ENCODE measurements at regions of chr22 and their contacts with region 1.

Region 1: GRCh38 chr22:28829358-28830181 is 29.2 kb upstream of the XBP1 start:
- DNase-seq: peak; percentile 27 to 88 (median 65)
- ATAC-seq: peak; percentile 68 to 83 (median 76)
- H3K4me3 ChIP-seq: no peak overlapping the region
- H3K4me3 Mint-ChIP-seq: peak overlapping the region in 1 of 3 donors; percentile 54
- H3K27ac ChIP-seq: no peak overlapping the region
- H3K27ac Mint-ChIP-seq: peak overlapping the region in 1 of 2 donors; percentile 34
- H3K4me1 ChIP-seq: peaks cover 3 to 16% of the 10 kb centered on the region in 2 experiments
- H3K4me1 Mint-ChIP-seq: peaks cover 26 to 36% (median 33%) of the 10 kb centered on the region in 3 donors
- H3K27me3 ChIP-seq: no peaks in the 10 kb centered on the region
- H3K27me3 Mint-ChIP-seq: no peaks in the 10 kb centered on the region

Region 2: GRCh38 chr22:28600546-28601143 is 228.9 kb before region 1 on chr22:
- CTCF ChIA-PET with region 1: interaction called in 1 of 2 experiments, 26 read pairs
- POLR2A ChIA-PET with region 1: interaction called in 1 of 2 experiments, 3 read pairs
- DNase-seq: peak in 9 of 35 experiments; percentile 3 to 70 (median 10)
- ATAC-seq: peak in 1 of 4 experiments; percentile 35
- H3K4me3 ChIP-seq: no peak overlapping the region
- H3K4me3 Mint-ChIP-seq: no peak overlapping the region
- H3K27ac ChIP-seq: no peak overlapping the region
- H3K27ac Mint-ChIP-seq: no peak overlapping the region
- H3K4me1 ChIP-seq: no peaks in the 10 kb centered on the region
- H3K4me1 Mint-ChIP-seq: no peaks in the 10 kb centered on the region
- H3K27me3 ChIP-seq: peaks cover 2 to 16% of the 10 kb centered on the region in 2 experiments
- H3K27me3 Mint-ChIP-seq: peaks cover 6 to 20% of the 10 kb centered on the region in 2 donors

Region 3: GRCh38 chr22:28750471-28750881 is 79.1 kb before region 1 on chr22:
- CTCF ChIA-PET with region 1: no interaction called
- POLR2A ChIA-PET with region 1: interaction called in 1 of 2 experiments, 10 read pairs
- DNase-seq: no peak
- ATAC-seq: no peak
- H3K4me3 ChIP-seq: no peak overlapping the region
- H3K4me3 Mint-ChIP-seq: no peak overlapping the region
- H3K27ac ChIP-seq: no peak overlapping the region
- H3K27ac Mint-ChIP-seq: no peak overlapping the region
- H3K4me1 ChIP-seq: peaks cover 0 to 14% of the 10 kb centered on the region in 2 experiments
- H3K4me1 Mint-ChIP-seq: peaks cover 10 to 11% (median 10%) of the 10 kb centered on the region in 3 donors
- H3K27me3 ChIP-seq: no peaks in the 10 kb centered on the region
- H3K27me3 Mint-ChIP-seq: no peaks in the 10 kb centered on the region

Region 4: DNA sequence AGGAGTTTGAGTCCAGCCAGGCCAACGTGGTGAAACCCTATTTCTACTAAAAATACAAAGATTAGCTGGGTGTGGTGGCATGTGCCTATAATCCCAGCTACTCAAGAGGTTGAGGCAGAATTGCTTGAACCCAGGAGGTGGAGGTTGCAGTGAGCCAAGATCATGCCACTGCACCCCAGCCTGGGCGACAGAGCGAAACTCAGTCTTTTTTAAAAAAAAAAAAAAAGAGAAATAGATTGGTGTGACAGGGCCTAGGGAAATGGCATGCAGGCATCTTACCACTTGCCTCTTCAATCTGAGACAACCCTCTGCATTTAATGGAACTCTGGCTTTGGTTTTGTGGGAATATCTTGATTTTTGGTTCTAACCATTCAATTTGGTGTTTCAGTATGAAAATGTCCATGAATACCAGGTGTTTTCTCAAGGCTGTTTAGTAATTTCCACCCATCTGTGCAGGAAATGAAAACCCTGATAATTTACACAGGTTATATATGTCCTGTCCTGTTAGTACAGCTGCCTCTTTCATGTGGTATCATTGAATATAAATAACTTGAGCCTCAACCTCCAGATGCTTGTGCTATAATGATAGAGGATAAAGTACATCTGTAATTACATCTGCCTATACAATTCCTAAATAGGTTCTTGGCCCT is 37.6 kb before region 1 on chr22:
- CTCF ChIA-PET with region 1: interaction called, 3 to 42 read pairs
- POLR2A ChIA-PET with region 1: interaction called in 1 of 2 experiments, 3 read pairs
- DNase-seq: no peak
- ATAC-seq: peak in 3 of 4 experiments; percentile 13 to 39 (median 20)
- H3K4me3 ChIP-seq: no peak overlapping the region
- H3K4me3 Mint-ChIP-seq: peak overlapping the region in 1 of 3 donors; percentile 55
- H3K27ac ChIP-seq: peak overlapping the region; percentile 20
- H3K27ac Mint-ChIP-seq: peak overlapping the region; percentile 41 to 75
- H3K4me1 ChIP-seq: peaks cover 9 to 43% of the 10 kb centered on the region in 2 experiments
- H3K4me1 Mint-ChIP-seq: peaks cover 63 to 71% (median 64%) of the 10 kb centered on the region in 3 donors
- H3K27me3 ChIP-seq: no peaks in the 10 kb centered on the region
- H3K27me3 Mint-ChIP-seq: no peaks in the 10 kb centered on the region

Region 5: DNA sequence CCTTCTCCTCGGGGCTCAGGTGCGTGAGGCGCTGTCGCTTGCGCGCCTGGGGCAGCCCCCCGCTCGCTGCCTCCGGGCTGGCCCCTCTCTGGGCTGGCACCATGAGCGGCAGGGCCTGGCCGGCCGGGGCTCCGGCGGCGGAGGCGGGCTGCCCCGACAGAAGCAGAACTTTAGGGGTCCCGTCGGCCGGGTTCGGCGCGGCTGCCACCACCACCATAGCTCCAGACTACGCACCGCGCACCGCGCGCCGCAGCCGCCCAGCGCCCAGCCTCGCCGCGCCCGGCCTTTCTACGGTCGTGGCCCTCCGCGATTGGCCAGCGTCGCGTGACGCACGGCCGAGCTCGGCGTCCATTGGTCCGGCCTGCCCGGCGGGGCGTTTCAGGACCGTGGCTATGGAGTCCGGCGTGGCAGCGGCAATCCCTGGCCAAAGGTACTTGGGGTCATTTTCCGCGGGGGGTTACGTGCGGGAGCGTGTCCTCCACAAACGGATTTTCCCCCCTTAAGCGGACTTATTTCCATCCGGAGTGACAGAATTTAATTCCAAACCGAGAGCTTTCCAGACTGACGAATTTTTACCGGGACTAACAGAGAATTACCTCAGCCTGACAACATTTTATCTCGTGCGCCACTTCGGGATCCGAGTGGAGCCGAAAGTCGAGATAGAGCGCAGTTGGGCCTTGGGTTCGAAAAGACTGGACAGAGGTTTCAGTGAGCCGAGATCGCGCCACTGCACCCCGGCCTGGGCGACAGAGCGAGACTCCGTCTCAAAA is 29.1 kb before region 1 on chr22 and contains the start of gene XBP1:
- CTCF ChIA-PET with region 1: interaction called, 11 to 21 read pairs
- POLR2A ChIA-PET with region 1: interaction called, 3 to 4 read pairs
- DNase-seq: peak; percentile 69 to 95 (median 82)
- ATAC-seq: peak; percentile 94 to 97 (median 96)
- H3K4me3 ChIP-seq: peak within 1 kb of the TSS; percentile 74 to 99
- H3K4me3 Mint-ChIP-seq: peak within 1 kb of the TSS; percentile 92 to 97 (median 94)
- H3K27ac ChIP-seq: peak within 1 kb of the TSS; percentile 88
- H3K27ac Mint-ChIP-seq: peak within 1 kb of the TSS; percentile 98 to 99
- H3K4me1 ChIP-seq: peaks cover 19 to 42% of the 10 kb centered on the region in 2 experiments
- H3K4me1 Mint-ChIP-seq: peaks cover 49 to 60% (median 58%) of the 10 kb centered on the region in 3 donors
- H3K27me3 ChIP-seq: no peaks in the 10 kb centered on the region
- H3K27me3 Mint-ChIP-seq: no peaks in the 10 kb centered on the region
- total RNA-seq, gene XBP1: 132 to 205 (median 140) TPM